Colonic mucosa (tissue), 4 donors: ENCODE measurements at regions of chr16 and their contacts with region 1.

Region 1: DNA sequence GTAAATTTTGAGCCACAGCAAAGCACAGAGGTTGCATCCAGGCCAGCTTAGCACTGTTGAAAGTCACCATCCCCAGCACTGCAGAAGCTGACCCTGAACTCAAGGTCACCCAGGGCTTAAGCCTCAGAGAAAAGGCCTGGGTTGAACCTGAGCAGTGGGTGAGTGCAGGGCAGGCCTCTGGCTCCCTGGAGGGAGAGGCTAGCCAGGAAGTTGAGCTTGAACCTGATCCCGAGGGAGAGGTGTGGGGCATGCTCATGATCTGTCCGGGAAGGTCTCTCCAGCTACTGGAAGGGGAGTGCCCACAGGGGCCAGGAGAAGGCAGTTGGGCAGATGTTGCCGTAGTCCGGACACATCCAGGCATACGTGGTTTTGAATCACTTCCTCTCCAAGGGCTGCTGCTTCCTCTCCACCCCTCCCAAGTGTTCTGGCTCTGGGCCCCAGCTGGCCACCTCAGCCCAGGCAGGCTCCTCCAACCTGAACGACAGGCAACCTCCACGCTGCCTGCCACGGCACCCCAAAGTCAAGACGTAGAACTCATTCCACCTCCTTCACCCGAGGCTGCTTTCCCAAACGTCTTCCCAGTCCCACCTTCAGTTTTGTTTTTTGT is 18.4 kb downstream of the CARHSP1 start:
- DNase-seq: peak; percentile 22
- H3K4me3 ChIP-seq: no peak overlapping the region
- H3K27ac ChIP-seq: no peak overlapping the region
- H3K4me1 ChIP-seq: no peaks in the 10 kb centered on the region
- H3K27me3 ChIP-seq: no peaks in the 10 kb centered on the region
- CTCF ChIP-seq: no peak

Region 2: DNA sequence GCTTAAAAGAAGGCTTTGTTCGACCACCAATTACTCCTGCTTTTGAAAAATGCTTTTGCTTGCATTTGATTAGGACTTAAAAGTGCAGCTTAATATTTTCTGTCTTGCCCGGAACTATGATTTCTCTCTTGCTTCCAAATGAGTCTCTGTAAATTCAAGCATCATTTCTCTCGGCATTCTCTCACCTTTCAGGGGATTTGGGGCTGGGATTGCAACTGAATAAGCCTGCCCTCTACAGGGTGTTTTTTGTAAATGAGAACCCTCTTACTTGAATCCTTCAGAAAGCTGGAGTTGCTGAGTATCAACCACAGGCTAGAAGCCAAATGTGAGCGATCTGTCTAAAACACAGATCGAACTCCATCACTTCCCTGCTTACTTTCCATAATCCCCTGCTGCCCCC is 494.7 kb before region 1 on chr16:
- intact Hi-C with region 1: no loop called
- DNase-seq: no peak
- H3K4me3 ChIP-seq: no peak overlapping the region
- H3K27ac ChIP-seq: no peak overlapping the region
- H3K4me1 ChIP-seq: no peaks in the 10 kb centered on the region
- H3K27me3 ChIP-seq: no peaks in the 10 kb centered on the region
- CTCF ChIP-seq: no peak

Region 3: GRCh38 chr16:8806272-8806983 is 44.0 kb before region 1 on chr16:
- intact Hi-C with region 1: loop called (anchors 10 kb)
- DNase-seq: no peak
- H3K4me3 ChIP-seq: no peak overlapping the region
- H3K27ac ChIP-seq: no peak overlapping the region
- H3K4me1 ChIP-seq: no peaks in the 10 kb centered on the region
- H3K27me3 ChIP-seq: no peaks in the 10 kb centered on the region
- CTCF ChIP-seq: no peak